AG04450 (cell line): ENCODE measurements at regions of chr20 and their contacts with region 1.

Region 1: DNA sequence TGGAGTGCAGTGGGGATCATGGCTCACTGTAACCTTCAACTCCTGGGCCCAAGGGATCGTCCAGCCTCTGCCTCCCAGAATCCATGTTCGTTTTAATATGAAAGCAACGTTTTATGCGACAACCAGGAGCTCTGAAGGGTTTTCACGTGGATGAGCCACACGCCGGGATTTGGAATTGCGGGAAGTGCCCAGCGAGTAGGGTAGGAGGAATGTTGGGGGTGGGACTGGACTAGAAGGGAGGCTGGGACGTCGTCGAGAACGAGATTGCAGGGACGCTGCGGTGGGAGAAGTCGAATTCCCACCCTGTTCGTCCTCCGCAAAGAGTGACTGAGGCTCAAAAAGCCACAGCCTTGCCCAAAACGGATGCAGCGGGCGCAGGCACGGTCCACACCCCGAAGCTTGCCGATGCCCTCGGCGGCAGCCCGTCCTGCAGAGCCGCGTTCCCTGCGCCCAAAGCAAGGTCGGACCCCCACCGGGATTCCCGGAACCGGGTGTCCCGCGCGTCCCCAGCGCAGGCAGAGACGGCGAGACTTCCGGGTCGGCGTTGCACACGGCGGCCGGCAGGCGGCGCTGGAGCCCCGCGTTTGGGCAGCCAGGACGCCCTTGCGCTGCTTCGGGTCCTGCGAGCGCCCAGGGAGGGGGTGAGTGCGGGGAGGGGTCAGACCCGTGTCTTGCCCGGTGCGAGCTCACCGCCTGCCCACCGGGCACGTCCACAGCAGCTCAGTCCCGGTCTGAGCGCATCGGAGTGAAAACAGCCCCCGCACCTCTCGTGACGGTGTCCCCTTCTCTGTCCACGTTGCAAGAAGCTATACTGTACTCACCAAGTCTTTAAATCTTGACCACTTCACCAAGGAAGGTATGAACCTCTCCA is 87.8 kb downstream of the DHX35 start:
- DNase-seq: peak; percentile 20
- H3K4me3 ChIP-seq: peak overlapping the region; percentile 93
- H3K27ac ChIP-seq: peak overlapping the region; percentile 31
- H3K27me3 ChIP-seq: no peaks in the 10 kb centered on the region
- CTCF ChIP-seq: peak; percentile 93

Region 2: GRCh38 chr20:38926142-38926933 is 123.6 kb before region 1 on chr20 and contains the start of gene FAM83D:
- CTCF ChIA-PET with region 1: interaction called, 196 read pairs
- POLR2A ChIA-PET with region 1: interaction called, 5 read pairs
- DNase-seq: peak; percentile 95
- H3K4me3 ChIP-seq: peak within 1 kb of the TSS; percentile 78
- H3K27ac ChIP-seq: no peak within 1 kb of the TSS
- H3K27me3 ChIP-seq: peaks cover 8% of the 10 kb centered on the region
- CTCF ChIP-seq: no peak
- polyA plus RNA-seq, gene FAM83D: 10.5 and 14.9 TPM in 2 replicates

Region 3: GRCh38 chr20:38973645-38974044 is 76.3 kb before region 1 on chr20:
- CTCF ChIA-PET with region 1: interaction called, 15 read pairs
- POLR2A ChIA-PET with region 1: no interaction called
- DNase-seq: no peak
- H3K4me3 ChIP-seq: peak overlapping the region; percentile 14
- H3K27ac ChIP-seq: peak overlapping the region; percentile 68
- H3K27me3 ChIP-seq: no peaks in the 10 kb centered on the region
- CTCF ChIP-seq: no peak

Region 4: DNA sequence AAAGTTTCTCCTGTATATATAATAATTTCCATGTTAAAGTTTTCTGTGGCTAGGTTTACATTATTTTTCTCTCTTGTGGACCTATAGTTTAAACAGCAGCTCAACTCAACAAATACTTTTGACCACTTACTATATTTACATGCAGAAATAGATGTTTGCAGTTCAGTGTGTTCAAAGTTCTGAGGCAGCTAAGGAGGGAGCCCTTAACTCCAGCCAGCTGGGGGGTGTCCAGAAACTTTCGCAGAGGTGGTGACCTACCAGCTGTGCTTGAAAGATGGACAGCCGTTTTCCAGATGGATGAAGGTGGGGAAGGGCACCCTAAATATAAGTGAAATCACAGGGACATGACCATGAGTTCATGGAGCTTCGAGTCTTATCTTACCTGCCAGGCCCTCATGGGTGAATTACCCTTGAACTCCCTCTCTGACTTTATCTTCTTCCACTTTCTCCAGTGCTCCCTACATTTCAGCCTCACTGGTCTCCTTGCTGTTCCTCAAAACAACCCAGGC is 54.3 kb before region 1 on chr20:
- CTCF ChIA-PET with region 1: interaction called, 15 read pairs
- POLR2A ChIA-PET with region 1: interaction called, 9 read pairs
- DNase-seq: no peak
- H3K4me3 ChIP-seq: no peak overlapping the region
- H3K27ac ChIP-seq: no peak overlapping the region
- H3K27me3 ChIP-seq: no peaks in the 10 kb centered on the region
- CTCF ChIP-seq: no peak

Region 5: DNA sequence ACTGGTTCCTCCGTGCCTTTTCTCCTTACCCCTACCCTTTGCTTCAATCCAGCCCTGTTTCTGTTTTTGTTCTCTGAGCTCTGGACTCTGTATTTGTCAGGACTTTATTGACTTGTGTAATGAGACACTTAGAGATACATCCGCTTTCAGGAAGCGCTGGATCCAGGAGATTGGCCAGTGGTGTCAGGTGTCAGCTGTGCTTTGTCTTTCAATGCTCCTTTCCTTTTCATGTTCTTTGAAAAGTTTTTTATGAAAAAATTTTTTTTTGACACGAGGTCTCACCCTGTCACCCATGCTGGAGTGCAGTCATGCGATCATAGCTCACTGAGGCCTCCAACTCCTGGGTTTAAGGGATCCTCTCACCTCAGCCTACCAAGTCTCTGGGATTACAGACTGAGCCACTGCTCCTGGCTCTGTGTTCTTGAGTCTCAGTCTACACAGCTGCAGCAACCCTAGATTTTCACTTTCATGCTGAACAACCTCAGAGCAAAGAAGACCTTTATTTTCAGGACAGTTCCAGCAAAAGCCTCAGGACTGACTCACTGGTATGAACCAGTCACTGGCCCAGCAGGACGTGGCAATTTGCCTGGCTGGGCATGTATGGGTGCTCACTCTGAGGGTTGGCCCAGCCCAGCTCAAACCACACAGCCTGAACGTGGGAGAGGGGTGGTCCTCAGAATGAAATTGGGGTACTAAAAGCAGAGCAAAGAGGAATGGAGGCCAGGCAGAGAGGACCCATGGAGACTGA is 20.7 kb after region 1 on chr20:
- CTCF ChIA-PET with region 1: interaction called, 315 read pairs
- POLR2A ChIA-PET with region 1: no interaction called
- DNase-seq: no peak
- H3K4me3 ChIP-seq: no peak overlapping the region
- H3K27ac ChIP-seq: no peak overlapping the region
- H3K27me3 ChIP-seq: no peaks in the 10 kb centered on the region
- CTCF ChIP-seq: no peak